ENCODE measurements at regions of chr11 and their contacts with region 1.

Region 1: DNA sequence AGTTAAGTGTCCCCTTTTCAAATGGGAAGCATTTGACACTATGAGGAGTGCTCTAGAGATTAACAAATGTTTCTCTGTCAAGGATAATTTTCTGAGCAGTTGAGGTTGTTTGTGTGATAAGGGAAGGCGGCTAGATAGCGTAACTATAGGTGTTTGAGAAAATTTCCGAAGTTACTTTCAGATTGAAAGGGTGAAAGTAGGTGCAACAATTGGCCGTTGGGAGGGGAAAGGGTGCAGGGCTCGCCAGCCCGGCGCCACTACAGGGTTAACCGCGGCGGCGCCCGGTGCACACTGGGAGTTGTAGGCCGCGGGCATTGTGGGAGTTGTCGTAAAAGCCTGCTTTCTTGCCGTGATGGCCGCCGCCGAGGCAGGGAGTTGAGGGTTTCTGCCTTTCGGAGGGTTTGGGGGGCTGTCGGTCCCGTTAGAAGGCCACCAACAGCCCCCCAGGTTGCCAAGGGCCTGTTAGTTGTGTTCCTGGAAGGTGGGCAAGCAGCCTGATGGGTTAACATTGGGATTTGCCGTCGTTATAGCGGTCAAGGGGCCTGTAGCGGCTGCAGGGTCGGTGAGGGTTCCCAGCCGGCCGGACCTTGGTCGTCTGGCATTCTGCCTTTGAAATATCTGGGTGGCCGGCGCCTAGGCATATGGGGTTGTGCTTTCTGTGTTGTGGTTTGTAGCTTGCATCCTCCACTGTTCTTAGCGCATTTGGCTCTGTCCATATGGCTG is 36.5 kb upstream of the HSD17B12 start:
- DNase-seq: peak; percentile 95

Region 2: DNA sequence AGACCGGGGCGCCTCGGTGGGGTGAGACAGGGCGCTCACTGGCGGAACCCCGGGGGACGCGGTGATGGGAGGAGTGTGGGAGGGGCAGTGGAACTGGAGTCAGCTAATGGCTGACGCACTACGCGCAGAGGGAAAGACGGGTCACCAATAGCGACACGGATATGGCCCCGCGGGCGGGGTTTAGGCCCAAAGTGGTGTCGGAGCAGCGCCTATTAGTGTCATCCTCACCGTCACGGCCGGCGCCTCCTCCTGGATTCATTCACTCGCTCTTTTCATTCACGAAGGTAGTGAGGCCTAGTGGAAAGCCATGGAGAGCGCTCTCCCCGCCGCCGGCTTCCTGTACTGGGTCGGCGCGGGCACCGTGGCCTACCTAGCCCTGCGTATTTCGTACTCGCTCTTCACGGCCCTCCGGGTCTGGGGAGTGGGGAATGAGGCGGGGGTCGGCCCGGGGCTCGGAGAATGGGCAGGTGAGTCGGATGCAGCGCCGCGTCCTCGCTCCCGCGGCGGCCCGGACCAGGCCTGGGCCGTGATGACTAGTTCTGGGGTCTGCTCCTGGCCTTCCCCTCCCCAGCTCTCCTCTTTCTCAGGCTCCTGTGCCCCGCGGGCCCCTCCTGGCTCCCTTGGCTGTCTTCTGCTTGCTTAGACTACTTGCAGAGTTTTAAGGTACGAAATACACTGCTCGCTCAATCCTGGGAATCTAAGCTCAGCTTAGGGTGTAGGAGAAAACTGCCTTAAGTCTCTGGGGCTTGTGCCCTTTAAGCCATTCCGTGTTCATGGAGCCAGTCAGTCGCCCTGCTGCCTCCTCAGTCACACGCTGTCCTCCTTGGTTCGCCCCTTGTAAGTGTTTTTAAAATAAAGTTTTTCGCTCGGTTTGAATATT is 36.7 kb after region 1 on chr11 and contains the start of gene HSD17B12:
- intact Hi-C with region 1: loop called (anchors 2 kb)
- DNase-seq: peak; percentile 100
- total RNA-seq, gene HSD17B12: 88.0 TPM

Region 3: DNA sequence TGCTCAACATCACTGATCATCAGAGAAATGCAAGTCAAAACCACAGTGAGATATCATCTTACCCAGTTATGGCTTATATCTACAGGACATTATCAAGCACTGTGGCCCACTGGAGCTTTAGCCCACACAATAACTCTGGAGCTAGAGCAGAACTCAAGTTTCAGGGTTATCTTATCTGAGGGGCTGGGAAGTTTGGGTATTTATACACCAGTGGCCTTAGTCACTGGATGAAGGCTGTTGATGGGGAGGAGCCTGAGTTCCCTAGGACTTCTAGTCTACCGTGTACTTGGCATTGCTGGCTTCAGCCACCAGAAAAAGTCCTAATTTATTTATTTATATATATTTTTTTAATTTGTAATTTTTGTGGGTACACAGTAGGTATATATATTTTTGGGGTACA is 55.8 kb after region 1 on chr11:
- intact Hi-C with region 1: no loop called
- DNase-seq: no peak

Region 4: GRCh38 chr11:43802509-43802908 is 158.4 kb after region 1 on chr11:
- intact Hi-C with region 1: loop called (anchors 10 kb)
- DNase-seq: no peak